GM12878 (cell line): ENCODE measurements at regions of chr17 and their contacts with region 1.

Region 1: DNA sequence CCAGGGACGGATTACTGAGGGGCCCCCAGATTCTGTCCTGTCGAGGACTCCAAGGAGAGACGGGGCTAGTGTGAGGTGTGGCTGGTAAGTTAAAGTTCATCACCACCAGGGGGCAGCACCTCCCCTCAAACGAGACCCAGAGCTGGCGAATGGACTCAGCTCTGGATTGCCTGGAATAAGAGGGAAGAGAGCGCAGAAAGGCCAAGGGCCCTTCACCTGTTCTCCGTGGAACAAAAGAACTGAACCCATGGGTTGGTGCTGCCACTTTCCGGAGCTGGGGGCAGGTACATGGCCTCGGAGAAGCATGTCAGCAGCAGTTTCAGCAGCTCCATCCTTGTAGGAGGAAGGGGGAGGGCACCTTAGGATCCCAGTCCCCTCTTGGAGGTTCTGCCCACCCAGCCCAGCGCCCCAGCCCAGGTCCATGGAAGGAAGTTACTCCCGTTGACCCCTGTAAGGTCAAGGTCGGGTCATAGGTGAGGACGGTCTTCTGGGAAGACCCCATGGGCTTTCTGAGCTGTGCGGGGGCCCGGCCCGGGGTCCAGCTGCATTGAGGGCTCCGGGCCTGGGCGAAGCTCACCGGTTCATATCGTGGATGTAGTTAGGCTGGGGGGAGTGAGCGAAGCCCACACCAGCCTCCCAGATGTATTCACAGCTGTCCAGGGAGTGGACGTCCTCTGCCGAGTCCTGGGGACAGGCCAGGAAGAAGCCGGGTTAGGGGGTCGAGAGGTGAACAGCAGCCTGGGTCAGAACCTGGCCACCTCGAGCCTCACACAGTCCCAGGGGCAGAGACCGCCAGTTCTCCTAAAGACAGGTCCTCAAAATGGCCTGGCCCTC is 10.7 kb downstream of the HID1 start:
- DNase-seq: no peak
- ATAC-seq: peak; percentile 86
- H3K4me3 ChIP-seq: no peak overlapping the region
- H3K27ac ChIP-seq: no peak overlapping the region
- H3K4me1 ChIP-seq: no peaks in the 10 kb centered on the region; the same call in 1 of the 2 replicates
- H3K27me3 ChIP-seq: no peaks in the 10 kb centered on the region
- CTCF ChIP-seq: peak; percentile 62 to 83 (median 72)
- EP300 ChIP-seq: no peak
- POLR2A ChIP-seq: no peak
- RAD21 ChIP-seq: peak; percentile 75

Region 2: GRCh38 chr17:74790161-74791054 is 171.5 kb before region 1 on chr17:
- CTCF ChIA-PET with region 1: interaction called, 36 read pairs
- POLR2A ChIA-PET with region 1: no interaction called
- RAD21 ChIA-PET with region 1: interaction called, 19 read pairs
- SMC1A ChIA-PET with region 1: interaction called, 16 read pairs
- in situ Hi-C with region 1: no loop called
- intact Hi-C with region 1: loop called (anchors 5 kb)
- DNase-seq: no peak
- ATAC-seq: no peak
- H3K4me3 ChIP-seq: no peak overlapping the region
- H3K27ac ChIP-seq: no peak overlapping the region
- H3K4me1 ChIP-seq: peaks cover 1% of the 10 kb centered on the region
- H3K27me3 ChIP-seq: no peaks in the 10 kb centered on the region
- CTCF ChIP-seq: no peak
- EP300 ChIP-seq: no peak
- POLR2A ChIP-seq: no peak
- RAD21 ChIP-seq: no peak

Region 3: DNA sequence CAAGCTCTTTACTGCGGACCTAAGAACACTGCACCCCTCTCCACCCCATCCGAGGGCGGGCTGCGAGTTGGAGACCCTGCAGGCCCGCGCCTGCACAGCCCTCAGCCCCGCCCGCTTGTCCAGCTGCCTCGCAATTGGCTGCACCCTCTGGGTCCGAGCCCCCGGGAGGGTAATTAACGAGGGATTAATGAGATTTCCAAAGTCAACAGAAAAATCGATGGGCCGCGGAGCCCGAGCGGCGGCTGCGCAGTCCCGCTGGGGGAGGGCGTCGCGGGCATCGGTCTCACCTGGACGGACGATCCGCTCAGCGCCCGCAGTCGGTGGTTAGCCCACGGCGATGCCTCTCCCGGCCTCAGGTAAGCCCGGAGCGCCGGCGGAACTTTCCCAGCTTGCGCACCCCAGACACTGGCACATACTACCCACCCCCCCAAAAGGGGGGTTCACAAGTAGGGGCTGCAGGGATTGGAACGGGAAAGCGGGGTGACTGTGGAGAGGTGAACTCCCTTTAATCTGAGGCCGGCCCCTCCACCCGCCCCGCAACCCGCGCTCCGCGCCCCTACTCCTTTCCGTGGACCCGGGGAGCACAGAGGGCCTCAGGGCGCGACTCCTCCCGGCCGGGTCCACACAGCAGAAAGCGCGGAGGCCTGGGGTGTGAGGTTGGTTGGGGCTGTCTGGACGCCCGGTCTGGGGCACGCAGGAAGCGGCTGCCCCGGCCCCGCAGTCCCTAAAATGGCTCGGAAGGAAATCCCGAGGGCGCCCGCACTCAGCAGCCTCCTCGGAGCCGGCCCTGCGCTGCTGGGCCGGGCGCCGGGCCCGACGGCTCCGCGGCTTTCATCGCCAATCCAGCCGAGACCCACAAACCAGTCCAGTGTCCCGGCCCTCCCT is 26.0 kb before region 1 on chr17 and contains the start of gene OTOP3:
- CTCF ChIA-PET with region 1: interaction called, 29 read pairs
- POLR2A ChIA-PET with region 1: no interaction called
- RAD21 ChIA-PET with region 1: interaction called, 4 read pairs
- SMC1A ChIA-PET with region 1: interaction called, 5 read pairs
- in situ Hi-C with region 1: no loop called
- intact Hi-C with region 1: no loop called
- DNase-seq: no peak
- ATAC-seq: no peak
- H3K4me3 ChIP-seq: no peak within 1 kb of the TSS
- H3K27ac ChIP-seq: no peak within 1 kb of the TSS
- H3K4me1 ChIP-seq: no peaks in the 10 kb centered on the region
- H3K27me3 ChIP-seq: peaks cover 8 to 9% of the 10 kb centered on the region in 2 experiments
- CTCF ChIP-seq: no peak
- EP300 ChIP-seq: no peak
- POLR2A ChIP-seq: no peak
- RAD21 ChIP-seq: no peak
- polyA plus RNA-seq, gene OTOP3: not detected

Region 4: GRCh38 chr17:75006653-75007052 is 44.8 kb after region 1 on chr17:
- CTCF ChIA-PET with region 1: interaction called, 64 read pairs
- POLR2A ChIA-PET with region 1: interaction called, 4 read pairs
- RAD21 ChIA-PET with region 1: interaction called, 39 read pairs
- SMC1A ChIA-PET with region 1: interaction called, 23 read pairs
- in situ Hi-C with region 1: no loop called
- intact Hi-C with region 1: no loop called
- DNase-seq: no peak
- ATAC-seq: no peak
- H3K4me3 ChIP-seq: no peak overlapping the region
- H3K27ac ChIP-seq: no peak overlapping the region
- H3K4me1 ChIP-seq: no peaks in the 10 kb centered on the region; the same call in 1 of the 2 replicates
- H3K27me3 ChIP-seq: no peaks in the 10 kb centered on the region; a peak in 1 of 4 replicates
- CTCF ChIP-seq: no peak
- EP300 ChIP-seq: no peak
- POLR2A ChIP-seq: no peak
- RAD21 ChIP-seq: peak; percentile 42

Region 5: DNA sequence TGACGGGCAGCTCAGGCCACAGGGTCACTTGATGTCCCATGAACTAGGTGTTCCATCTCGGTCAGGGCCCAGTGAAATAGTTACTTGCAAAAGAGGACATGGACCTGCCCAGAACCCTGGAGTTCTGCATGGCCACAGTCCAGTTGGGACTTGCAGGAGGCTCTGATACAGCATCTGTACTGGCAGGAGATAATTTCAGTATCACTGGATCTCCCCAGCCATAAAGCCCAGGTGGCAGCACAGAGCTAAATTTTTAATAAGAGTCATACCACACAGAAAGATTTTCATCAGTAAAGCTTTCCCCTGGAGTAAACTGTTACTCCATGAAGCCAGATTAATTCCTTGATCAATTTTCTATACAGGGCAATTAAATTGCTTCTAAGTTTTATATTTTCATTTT is 107.9 kb after region 1 on chr17:
- CTCF ChIA-PET with region 1: interaction called, 33 read pairs
- POLR2A ChIA-PET with region 1: no interaction called
- RAD21 ChIA-PET with region 1: interaction called, 9 read pairs
- SMC1A ChIA-PET with region 1: interaction called, 6 read pairs
- in situ Hi-C with region 1: no loop called
- intact Hi-C with region 1: no loop called
- DNase-seq: no peak
- ATAC-seq: peak; percentile 68
- H3K4me3 ChIP-seq: no peak overlapping the region
- H3K27ac ChIP-seq: no peak overlapping the region
- H3K4me1 ChIP-seq: peaks cover 15% of the 10 kb centered on the region
- H3K27me3 ChIP-seq: no peaks in the 10 kb centered on the region
- CTCF ChIP-seq: peak in 2 of 3 experiments; percentile 35 to 50; a peak in 4 of 6 replicates
- EP300 ChIP-seq: no peak
- POLR2A ChIP-seq: no peak
- RAD21 ChIP-seq: 0 out of 2 replicates have a peak, but pooled peaks have one; percentile 24

Region 6: DNA sequence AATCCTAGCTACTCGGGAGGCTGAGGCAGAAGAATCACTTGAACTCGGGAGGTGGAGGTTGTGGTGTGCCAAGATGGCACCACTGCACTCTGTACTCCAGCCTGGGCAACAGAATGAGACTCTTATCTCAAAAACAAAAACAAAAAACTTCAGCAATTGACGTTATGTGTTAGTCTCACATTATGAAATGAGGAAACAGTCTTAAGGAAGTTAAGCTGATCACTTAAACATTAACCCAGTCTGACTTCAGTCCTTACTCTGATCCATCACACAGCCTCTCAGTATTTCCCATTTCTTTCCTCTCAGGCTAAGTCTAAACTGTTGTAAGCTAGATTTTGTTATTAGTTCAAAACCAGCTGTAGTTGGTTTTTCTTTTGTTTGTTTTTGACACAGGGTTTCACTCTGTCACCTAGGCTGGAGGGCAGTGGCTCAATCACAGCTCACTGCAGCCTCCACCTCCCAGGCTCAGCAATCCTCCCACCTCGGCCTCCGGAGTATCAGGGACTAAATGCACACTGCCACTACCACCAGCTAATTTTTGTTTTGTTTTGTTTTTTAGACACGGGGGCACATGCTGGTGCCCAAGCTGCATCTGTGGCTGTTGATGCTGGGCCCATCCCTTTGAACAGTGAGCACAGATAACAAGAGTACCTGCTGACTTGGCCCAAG is 186.1 kb after region 1 on chr17:
- CTCF ChIA-PET with region 1: interaction called, 10 read pairs
- POLR2A ChIA-PET with region 1: no interaction called
- RAD21 ChIA-PET with region 1: no interaction called
- SMC1A ChIA-PET with region 1: no interaction called
- in situ Hi-C with region 1: no loop called
- intact Hi-C with region 1: no loop called
- DNase-seq: no peak
- ATAC-seq: peak; percentile 26; the same call in 2 of the 3 replicates
- H3K4me3 ChIP-seq: no peak overlapping the region
- H3K27ac ChIP-seq: no peak overlapping the region
- H3K4me1 ChIP-seq: no peaks in the 10 kb centered on the region
- H3K27me3 ChIP-seq: no peaks in the 10 kb centered on the region
- CTCF ChIP-seq: no peak
- EP300 ChIP-seq: no peak
- POLR2A ChIP-seq: no peak
- RAD21 ChIP-seq: no peak

Region 7: DNA sequence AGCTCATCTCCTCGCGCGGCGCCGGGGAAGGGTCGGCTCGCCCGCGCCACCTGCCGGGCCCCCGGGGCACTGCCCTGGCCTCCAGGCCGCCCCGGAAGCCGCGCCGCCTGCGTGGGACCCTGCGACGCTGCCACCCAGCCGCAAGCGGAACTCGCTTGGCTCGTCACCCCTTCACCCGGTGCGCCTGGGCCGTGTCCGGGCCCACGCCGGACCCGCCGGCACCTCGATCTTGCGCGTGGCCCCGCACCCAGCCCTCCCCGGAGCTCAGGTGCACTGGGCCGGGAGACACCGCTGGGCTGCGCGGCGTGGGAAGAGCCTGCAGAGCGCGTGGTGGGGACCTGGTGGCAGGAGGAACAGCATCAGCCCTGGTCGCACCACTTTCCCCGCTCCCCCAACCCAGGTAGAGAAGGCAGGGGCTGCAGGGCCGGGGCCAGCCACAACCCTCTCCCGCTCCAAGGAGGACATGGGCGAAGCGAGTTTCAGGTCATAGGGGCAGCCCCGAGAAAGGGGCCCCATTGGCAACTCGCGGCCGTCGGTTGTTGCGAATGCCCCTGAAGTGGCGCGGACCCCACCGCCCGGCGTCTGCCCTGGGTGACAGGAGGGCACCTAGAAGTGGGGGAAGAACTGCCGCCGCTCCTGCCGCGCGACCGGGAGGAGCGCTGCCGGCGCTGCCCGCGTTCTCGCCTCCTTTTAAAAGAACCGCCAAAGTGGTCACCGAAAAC is 309.5 kb after region 1 on chr17:
- CTCF ChIA-PET with region 1: interaction called, 14 read pairs
- POLR2A ChIA-PET with region 1: no interaction called
- RAD21 ChIA-PET with region 1: interaction called, 15 read pairs
- SMC1A ChIA-PET with region 1: interaction called, 5 read pairs
- in situ Hi-C with region 1: no loop called
- intact Hi-C with region 1: no loop called
- DNase-seq: no peak
- ATAC-seq: peak; percentile 82
- H3K4me3 ChIP-seq: peak overlapping the region; percentile 70
- H3K27ac ChIP-seq: peak overlapping the region; percentile 91
- H3K4me1 ChIP-seq: peaks cover 24% of the 10 kb centered on the region
- H3K27me3 ChIP-seq: no peaks in the 10 kb centered on the region
- CTCF ChIP-seq: peak; percentile 66 to 87 (median 79); a peak in 4 of 6 replicates
- EP300 ChIP-seq: no peak
- POLR2A ChIP-seq: peak; percentile 79
- RAD21 ChIP-seq: peak; percentile 40; the same call in 1 of the 2 replicates

Region 8: DNA sequence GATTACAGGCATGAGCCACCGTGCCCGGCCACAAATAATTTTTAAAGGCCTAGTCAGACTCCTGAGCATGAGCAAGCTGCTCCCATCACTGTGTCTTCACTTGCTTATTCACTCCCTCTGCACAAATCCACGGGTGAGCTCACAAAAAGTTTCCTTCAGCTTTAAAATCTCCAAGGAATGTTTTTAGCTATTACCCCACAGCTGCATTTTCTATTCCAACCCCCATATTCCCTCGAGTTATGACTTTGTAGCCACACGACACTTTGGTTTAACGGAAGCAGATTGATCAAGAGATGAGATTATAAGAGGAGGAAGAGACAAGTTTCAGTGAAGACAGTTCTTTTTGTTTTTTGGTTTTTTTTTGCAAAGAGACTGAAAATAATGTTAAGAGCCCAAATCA is 376.5 kb after region 1 on chr17:
- CTCF ChIA-PET with region 1: no interaction called
- POLR2A ChIA-PET with region 1: no interaction called
- RAD21 ChIA-PET with region 1: no interaction called
- SMC1A ChIA-PET with region 1: no interaction called
- in situ Hi-C with region 1: no loop called
- intact Hi-C with region 1: no loop called
- DNase-seq: no peak
- ATAC-seq: peak; percentile 28
- H3K4me3 ChIP-seq: peak overlapping the region; percentile 40; the same call in 1 of the 2 replicates
- H3K27ac ChIP-seq: peak overlapping the region; percentile 36
- H3K4me1 ChIP-seq: peaks cover 44% of the 10 kb centered on the region
- H3K27me3 ChIP-seq: no peaks in the 10 kb centered on the region
- CTCF ChIP-seq: no peak
- EP300 ChIP-seq: no peak
- POLR2A ChIP-seq: no peak
- RAD21 ChIP-seq: no peak